PC-3 (cell line): ENCODE measurements at regions of chr11 and their contacts with region 1.

Region 1: GRCh38 chr11:73787643-73788537 is at the start of gene MRPL48:
- DNase-seq: peak; percentile 98
- ATAC-seq: peak; percentile 98
- H3K4me3 ChIP-seq: peak within 1 kb of the TSS; percentile 85
- H3K27ac ChIP-seq: peak within 1 kb of the TSS; percentile 95
- H3K4me1 ChIP-seq: peaks cover 21% of the 10 kb centered on the region
- H3K27me3 ChIP-seq: no peaks in the 10 kb centered on the region
- CTCF ChIP-seq: no peak
- total RNA-seq, gene MRPL48: 48.0 and 80.8 TPM in 2 replicates

Region 2: GRCh38 chr11:73728000-73728399 is 59.9 kb before region 1 on chr11:
- CTCF ChIA-PET with region 1: interaction called, 16 read pairs
- POLR2A ChIA-PET with region 1: no interaction called
- intact Hi-C with region 1: no loop called
- DNase-seq: no peak
- ATAC-seq: no peak
- H3K4me3 ChIP-seq: no peak overlapping the region
- H3K27ac ChIP-seq: no peak overlapping the region
- H3K4me1 ChIP-seq: no peaks in the 10 kb centered on the region
- H3K27me3 ChIP-seq: no peaks in the 10 kb centered on the region
- CTCF ChIP-seq: no peak

Region 3: DNA sequence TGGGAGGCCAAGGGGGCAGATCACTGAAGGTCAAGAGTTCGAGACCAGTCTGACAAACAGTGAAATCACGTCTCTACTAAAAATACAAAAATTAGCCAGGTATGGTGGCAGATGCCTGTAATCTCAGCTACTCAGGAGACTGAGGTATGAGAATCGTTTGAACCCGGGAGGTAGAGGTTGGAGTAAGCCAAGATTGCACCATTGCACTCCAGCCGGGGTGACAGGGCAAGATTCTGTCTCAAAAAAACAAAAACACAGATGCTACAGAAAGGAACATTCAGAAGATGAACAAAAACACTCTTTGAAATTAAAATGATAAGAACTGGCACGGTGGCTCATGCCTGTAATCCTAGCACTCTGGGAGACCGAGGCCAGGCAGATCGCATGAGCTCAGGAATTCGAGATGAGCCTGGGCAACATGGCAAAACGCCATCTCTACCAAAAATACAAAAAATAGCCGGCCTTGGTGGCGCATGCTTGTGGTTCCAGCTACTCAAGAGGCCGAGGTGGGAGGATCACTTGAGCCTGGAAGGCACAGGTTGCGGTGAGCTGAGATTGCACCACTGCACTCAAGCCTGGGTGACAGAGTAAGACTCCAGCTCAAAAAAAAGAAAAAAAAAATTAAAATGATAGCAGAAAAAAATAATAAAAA is 35.5 kb before region 1 on chr11:
- CTCF ChIA-PET with region 1: no interaction called
- POLR2A ChIA-PET with region 1: no interaction called
- intact Hi-C with region 1: no loop called
- DNase-seq: no peak
- ATAC-seq: no peak
- H3K4me3 ChIP-seq: no peak overlapping the region
- H3K27ac ChIP-seq: no peak overlapping the region
- H3K4me1 ChIP-seq: no peaks in the 10 kb centered on the region
- H3K27me3 ChIP-seq: no peaks in the 10 kb centered on the region
- CTCF ChIP-seq: no peak